ENCODE measurements at regions of chr19 and their contacts with region 1.

Region 1: GRCh38 chr19:46392243-46392801 is 21.0 kb downstream of the CCDC8 start:
- DNase-seq: no peak
- H3K4me3 ChIP-seq: no peak overlapping the region
- H3K27ac ChIP-seq: peak overlapping the region; percentile 21 to 55 (median 48)
- H3K4me1 ChIP-seq: peaks cover 2 to 35% (median 27%) of the 10 kb centered on the region in 4 donors
- H3K27me3 ChIP-seq: peaks cover 0 to 3% (median 0%) of the 10 kb centered on the region in 4 donors
- CTCF ChIP-seq: no peak
- EP300 ChIP-seq: no peak
- POLR2A ChIP-seq: no peak

Region 2: DNA sequence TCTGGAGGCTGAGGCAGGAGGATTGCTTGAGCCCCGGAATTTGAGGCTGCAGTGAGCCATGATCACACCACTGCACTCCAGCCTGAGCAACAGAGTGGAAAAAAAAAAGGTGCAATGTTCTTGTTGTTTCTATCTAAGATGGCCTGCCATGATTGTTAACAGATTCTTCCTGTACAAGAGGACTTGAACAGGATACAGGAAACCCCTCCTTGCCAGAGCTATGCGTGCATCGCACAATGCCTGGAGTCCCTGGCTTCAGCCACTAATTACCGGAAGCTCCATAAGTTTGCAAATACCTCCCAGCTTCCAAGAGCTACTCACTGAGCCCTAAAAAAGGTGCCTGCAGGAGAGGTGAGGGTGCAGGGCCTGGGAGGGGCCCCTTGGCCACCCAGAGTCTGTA is 108.6 kb before region 1 on chr19:
- intact Hi-C with region 1: loop called (anchors 5 kb)
- DNase-seq: no peak
- H3K4me3 ChIP-seq: no peak overlapping the region
- H3K27ac ChIP-seq: peak overlapping the region; percentile 48 to 64 (median 64)
- H3K4me1 ChIP-seq: peaks cover 13 to 31% (median 13%) of the 10 kb centered on the region in 4 donors
- H3K27me3 ChIP-seq: no peaks in the 10 kb centered on the region
- CTCF ChIP-seq: no peak
- EP300 ChIP-seq: no peak
- POLR2A ChIP-seq: no peak

Region 3: DNA sequence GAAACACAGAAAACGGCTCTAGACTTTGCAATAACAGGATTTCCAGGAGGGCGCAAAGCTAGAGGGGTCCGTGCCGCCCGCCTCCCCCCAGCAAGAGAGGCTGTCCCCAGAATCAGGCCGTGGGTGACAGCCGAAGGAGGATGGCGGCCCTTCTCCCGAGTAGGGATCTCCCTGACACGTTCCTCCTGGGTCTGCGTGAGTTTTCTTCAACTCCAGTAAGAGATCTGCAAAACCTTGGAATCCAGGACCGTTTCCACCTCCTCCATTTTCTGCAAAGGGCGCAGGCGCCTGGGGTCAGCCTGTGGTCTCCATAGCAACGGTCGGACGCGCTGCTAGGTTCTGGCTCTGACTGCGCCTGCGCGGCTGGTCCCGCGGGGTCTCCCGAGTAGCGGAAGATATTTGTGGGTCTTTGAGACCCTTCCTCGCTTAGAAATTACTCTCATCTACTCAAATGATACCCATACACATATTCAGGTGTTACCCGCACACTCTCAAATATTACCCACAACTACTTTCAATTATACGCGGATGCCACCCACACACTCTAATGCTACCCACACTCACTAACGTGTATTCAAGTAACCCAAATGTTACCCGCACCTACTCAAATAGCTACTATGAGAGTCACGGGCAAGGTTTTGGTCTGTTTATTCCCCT is 34.3 kb after region 1 on chr19:
- intact Hi-C with region 1: no loop called
- DNase-seq: no peak
- H3K4me3 ChIP-seq: peak overlapping the region; percentile 52 to 57 (median 54)
- H3K27ac ChIP-seq: peak overlapping the region in 2 of 4 donors; percentile 35 to 64
- H3K4me1 ChIP-seq: peaks cover 5 to 26% (median 22%) of the 10 kb centered on the region in 4 donors
- H3K27me3 ChIP-seq: peaks cover 0 to 40% (median 0%) of the 10 kb centered on the region in 4 donors
- CTCF ChIP-seq: no peak
- EP300 ChIP-seq: no peak
- POLR2A ChIP-seq: no peak

Region 4: DNA sequence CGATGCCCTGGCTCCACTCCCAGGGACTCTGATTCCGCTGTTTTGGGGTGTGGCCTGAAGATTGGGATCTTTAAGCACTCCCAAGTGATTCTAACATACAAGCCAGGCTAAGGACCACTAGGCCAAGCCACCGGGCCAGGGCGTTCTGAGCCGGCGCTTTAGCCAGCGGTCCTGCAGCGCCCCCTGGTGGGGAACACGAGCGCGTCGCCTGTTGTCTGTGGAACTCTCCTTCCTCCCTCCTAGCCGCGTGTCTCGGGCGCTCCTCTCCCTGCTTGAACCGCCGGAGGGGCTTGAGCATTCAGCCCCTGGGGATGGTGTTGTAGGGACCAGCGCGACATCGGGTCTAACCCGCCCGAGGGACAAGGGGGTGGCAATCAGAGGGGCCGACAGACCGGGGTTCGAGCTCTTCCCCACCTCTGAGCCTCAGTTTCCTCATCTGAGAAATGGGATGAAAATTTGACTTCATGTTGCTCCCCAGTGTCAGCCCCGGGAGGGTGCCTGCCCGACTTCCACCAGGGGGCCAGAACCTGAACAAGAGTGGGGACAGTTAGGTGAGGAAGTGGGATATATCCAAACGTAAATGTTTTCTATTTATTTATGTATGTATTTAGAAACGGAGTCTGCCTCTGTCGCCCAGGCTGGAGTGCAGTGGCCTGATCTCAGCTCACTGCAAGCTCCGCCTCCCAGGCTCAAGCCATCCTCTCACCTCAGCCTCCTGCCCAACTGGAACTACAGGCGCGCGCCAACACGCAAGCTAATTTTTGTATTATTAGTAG is 121.3 kb after region 1 on chr19:
- intact Hi-C with region 1: loop called (anchors 10 kb)
- DNase-seq: peak; percentile 94
- H3K4me3 ChIP-seq: no peak overlapping the region
- H3K27ac ChIP-seq: no peak overlapping the region
- H3K4me1 ChIP-seq: peaks cover 0 to 14% (median 7%) of the 10 kb centered on the region in 4 donors
- H3K27me3 ChIP-seq: peaks cover 0 to 19% (median 0%) of the 10 kb centered on the region in 4 donors
- CTCF ChIP-seq: peak; percentile 88 to 93 (median 90)
- EP300 ChIP-seq: no peak
- POLR2A ChIP-seq: no peak